ENCODE measurements at regions of chr1 and their contacts with region 1.

Region 1: DNA sequence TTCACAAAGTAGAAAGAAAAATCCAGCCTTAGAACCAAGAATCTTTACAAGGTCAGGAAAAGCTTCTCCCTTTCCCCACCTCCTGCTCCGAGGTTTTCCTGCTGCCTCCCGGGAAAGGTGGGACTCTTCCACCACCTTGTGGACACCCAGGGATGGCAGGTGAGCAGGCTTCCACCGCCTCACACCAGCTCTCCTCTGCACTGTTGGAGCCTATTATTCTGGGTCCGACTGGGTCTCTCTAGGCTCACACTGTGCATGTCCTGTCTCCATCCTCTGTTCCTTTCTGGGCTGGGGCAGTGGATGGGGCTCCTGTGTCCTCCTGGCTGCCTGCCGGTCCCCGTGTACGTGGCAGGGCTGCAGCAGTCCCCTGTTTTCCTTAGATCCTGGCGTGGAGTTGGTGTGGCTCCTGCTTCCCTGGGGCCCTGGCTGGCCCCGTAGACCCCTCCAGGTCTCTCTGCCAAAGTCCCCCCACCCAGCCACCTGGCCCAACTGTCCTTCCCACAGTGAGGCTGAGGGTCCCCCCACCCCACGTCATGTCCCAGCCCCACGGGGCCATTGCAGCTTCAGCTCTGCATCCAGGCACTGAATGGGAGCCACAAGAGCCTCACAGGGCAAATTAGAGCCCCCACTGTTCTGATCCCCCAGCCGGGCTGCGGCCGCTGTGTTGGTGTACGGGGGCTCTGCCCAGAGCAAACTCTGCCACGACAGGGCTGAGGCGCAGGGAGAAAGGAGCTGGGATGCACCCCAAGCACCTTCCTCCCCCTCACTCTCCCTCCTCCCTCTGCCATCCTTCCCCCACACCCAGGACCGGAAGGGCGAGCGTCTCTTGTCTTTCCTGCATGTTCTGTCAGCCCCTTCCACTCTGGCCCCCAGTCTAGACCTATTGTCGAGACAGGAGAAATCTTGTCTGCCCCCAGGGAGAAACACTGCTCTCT is 3.3 kb upstream of the SLC45A1 start:
- DNase-seq: peak; percentile 29 to 68 (median 36)
- H3K4me3 ChIP-seq: no peak overlapping the region
- H3K4me3 Mint-ChIP-seq: no peak overlapping the region
- H3K27ac ChIP-seq: no peak overlapping the region
- H3K27ac Mint-ChIP-seq: no peak overlapping the region
- H3K4me1 ChIP-seq: peaks cover 11% of the 10 kb centered on the region
- H3K4me1 Mint-ChIP-seq: peaks cover 14 to 18% (median 16%) of the 10 kb centered on the region in 3 donors
- H3K27me3 ChIP-seq: peaks cover 12% of the 10 kb centered on the region
- H3K27me3 Mint-ChIP-seq: peaks cover 14 to 31% of the 10 kb centered on the region in 2 donors

Region 2: GRCh38 chr1:8015036-8015808 is 299.4 kb before region 1 on chr1:
- CTCF ChIA-PET with region 1: interaction called, 47 read pairs
- POLR2A ChIA-PET with region 1: no interaction called
- DNase-seq: peak in 3 of 5 donors; percentile 8 to 50 (median 33)
- H3K4me3 ChIP-seq: no peak overlapping the region
- H3K4me3 Mint-ChIP-seq: no peak overlapping the region
- H3K27ac ChIP-seq: no peak overlapping the region
- H3K27ac Mint-ChIP-seq: no peak overlapping the region
- H3K4me1 ChIP-seq: no peaks in the 10 kb centered on the region
- H3K4me1 Mint-ChIP-seq: peaks cover 0 to 7% (median 0%) of the 10 kb centered on the region in 3 donors
- H3K27me3 ChIP-seq: no peaks in the 10 kb centered on the region
- H3K27me3 Mint-ChIP-seq: peaks cover 4 to 30% of the 10 kb centered on the region in 2 donors

Region 3: DNA sequence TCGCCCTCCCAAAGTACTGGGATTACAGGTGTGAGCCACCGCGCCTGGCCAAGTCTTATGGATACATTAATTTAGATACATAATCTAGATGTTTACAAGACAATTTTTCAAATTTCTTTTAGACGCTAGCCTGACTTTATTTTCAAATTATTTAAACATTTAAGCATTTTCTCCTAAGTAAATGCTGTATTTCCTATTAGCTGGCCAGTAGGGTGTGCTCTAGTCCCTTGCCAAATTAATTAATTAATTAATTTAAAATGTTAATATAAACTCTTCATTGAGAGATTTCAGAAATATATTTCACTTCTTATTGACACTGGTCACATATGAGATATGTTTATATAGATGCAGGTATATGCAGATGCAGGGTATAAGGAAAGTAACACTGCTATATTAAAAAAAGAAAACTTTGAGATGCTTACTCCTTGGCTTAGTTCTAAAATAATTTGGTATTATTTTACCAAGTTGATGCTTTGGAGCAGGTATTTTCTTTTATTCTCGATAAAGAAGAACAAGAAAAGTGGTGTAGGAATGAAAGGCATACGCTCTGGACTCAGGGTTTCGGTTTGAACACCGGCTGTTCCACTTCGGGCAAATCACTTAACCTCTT is 283.3 kb before region 1 on chr1:
- CTCF ChIA-PET with region 1: interaction called, 39 read pairs
- POLR2A ChIA-PET with region 1: no interaction called
- DNase-seq: peak in 2 of 5 donors; percentile 26 to 32
- H3K4me3 ChIP-seq: no peak overlapping the region
- H3K4me3 Mint-ChIP-seq: no peak overlapping the region
- H3K27ac ChIP-seq: no peak overlapping the region
- H3K27ac Mint-ChIP-seq: no peak overlapping the region
- H3K4me1 ChIP-seq: peaks cover 5% of the 10 kb centered on the region
- H3K4me1 Mint-ChIP-seq: peaks cover 6 to 7% (median 6%) of the 10 kb centered on the region in 3 donors
- H3K27me3 ChIP-seq: no peaks in the 10 kb centered on the region
- H3K27me3 Mint-ChIP-seq: peaks cover 0 to 6% of the 10 kb centered on the region in 2 donors

Region 4: DNA sequence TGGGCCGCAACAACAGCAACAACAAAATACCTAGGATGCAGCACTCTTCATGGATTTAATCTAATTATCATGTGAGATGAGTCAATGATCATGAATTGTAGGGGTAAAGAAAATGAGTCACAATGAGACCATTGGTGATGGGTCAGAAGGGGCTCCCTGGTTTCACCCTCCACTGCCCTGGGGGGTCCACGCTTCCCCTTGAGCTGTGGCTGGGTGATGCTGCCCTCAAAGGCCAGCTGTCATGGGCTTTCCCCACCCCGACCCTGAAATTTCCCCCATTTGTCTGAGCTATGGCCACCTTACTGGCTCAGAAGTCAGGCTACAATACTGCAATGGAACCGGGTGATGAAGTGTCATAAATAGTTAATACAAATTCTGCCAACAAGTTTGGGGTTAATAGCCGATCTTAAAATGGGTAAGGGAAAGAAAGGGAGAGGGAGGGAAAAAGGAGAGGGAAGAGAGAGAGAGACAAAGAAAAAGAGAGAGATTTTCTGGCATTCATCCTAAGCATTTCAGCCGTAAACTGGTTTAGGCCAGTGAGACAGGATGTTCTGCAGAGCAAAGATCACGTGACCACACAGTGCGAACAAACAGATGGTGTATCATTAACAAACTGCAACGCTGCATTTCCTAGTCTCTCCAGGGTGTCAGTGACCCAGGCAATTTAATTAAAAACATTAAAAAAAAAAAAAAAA is 145.1 kb before region 1 on chr1:
- CTCF ChIA-PET with region 1: interaction called, 4 read pairs
- POLR2A ChIA-PET with region 1: interaction called, 12 read pairs
- DNase-seq: peak; percentile 30 to 78 (median 55)
- H3K4me3 ChIP-seq: peak overlapping the region; percentile 28
- H3K4me3 Mint-ChIP-seq: peak overlapping the region in 6 of 7 donors; percentile 60 to 75 (median 68)
- H3K27ac ChIP-seq: peak overlapping the region; percentile 82
- H3K27ac Mint-ChIP-seq: peak overlapping the region; percentile 87 to 98 (median 95)
- H3K4me1 ChIP-seq: peaks cover 35% of the 10 kb centered on the region
- H3K4me1 Mint-ChIP-seq: peaks cover 43 to 57% (median 48%) of the 10 kb centered on the region in 3 donors
- H3K27me3 ChIP-seq: no peaks in the 10 kb centered on the region
- H3K27me3 Mint-ChIP-seq: no peaks in the 10 kb centered on the region

Region 5: DNA sequence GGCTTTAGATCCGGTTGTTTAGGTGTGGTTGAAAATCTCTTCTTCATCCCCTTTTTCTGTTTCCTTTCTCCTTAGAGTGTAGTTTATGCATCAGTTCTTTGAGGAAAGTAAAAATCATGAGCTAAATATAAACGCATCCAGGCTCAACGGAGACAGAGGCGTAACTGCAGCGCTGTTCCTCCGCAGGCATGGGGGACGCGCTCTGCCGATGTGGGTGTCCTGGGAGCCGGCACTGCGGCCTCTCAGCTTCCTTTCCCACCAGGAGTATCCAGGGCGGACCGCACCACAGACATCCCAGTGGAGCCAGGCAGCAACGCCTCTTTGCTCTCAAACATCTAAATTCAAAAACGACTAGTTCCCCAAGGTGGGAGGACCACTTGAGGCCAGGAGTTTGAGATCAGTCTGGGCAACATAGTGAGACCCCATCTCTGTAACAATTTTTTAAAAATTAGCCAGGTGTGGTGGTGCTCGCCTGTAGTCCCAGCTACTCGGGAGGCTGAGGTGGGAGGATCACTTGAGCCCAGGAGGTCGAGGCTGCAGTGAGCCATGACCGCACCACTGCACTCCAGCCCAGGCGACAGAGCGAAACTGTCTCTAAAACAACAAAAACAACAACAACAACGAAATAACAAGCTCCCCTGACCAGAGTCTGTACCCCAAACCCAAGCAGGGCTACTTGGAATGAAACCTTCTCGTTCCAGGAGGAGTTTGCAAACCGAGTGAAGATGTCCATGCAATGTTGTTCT is 19.7 kb after region 1 on chr1:
- CTCF ChIA-PET with region 1: no interaction called
- POLR2A ChIA-PET with region 1: no interaction called
- DNase-seq: no peak
- H3K4me3 ChIP-seq: no peak overlapping the region
- H3K4me3 Mint-ChIP-seq: no peak overlapping the region
- H3K27ac ChIP-seq: no peak overlapping the region
- H3K27ac Mint-ChIP-seq: no peak overlapping the region
- H3K4me1 ChIP-seq: no peaks in the 10 kb centered on the region
- H3K4me1 Mint-ChIP-seq: no peaks in the 10 kb centered on the region
- H3K27me3 ChIP-seq: no peaks in the 10 kb centered on the region
- H3K27me3 Mint-ChIP-seq: no peaks in the 10 kb centered on the region

Measured in CD8-positive, alpha-beta memory T cell (primary cell).